A673 (cell line): ENCODE measurements at regions of chr3 and their contacts with region 1.

Region 1: GRCh38 chr3:81302045-81302444 is 459.4 kb downstream of the GBE1 start:
- DNase-seq: peak; percentile 71
- H3K4me3 ChIP-seq: no peak overlapping the region
- H3K27ac ChIP-seq: no peak overlapping the region
- H3K4me1 ChIP-seq: no peaks in the 10 kb centered on the region
- H3K27me3 ChIP-seq: no peaks in the 10 kb centered on the region
- CTCF ChIP-seq: peak; percentile 73

Region 2: GRCh38 chr3:81483046-81483445 is 181.0 kb after region 1 on chr3:
- CTCF ChIA-PET with region 1: interaction called, 10 read pairs
- POLR2A ChIA-PET with region 1: no interaction called
- intact Hi-C with region 1: no loop called
- DNase-seq: no peak
- H3K4me3 ChIP-seq: no peak overlapping the region
- H3K27ac ChIP-seq: no peak overlapping the region
- H3K4me1 ChIP-seq: no peaks in the 10 kb centered on the region
- H3K27me3 ChIP-seq: no peaks in the 10 kb centered on the region
- CTCF ChIP-seq: no peak

Region 3: DNA sequence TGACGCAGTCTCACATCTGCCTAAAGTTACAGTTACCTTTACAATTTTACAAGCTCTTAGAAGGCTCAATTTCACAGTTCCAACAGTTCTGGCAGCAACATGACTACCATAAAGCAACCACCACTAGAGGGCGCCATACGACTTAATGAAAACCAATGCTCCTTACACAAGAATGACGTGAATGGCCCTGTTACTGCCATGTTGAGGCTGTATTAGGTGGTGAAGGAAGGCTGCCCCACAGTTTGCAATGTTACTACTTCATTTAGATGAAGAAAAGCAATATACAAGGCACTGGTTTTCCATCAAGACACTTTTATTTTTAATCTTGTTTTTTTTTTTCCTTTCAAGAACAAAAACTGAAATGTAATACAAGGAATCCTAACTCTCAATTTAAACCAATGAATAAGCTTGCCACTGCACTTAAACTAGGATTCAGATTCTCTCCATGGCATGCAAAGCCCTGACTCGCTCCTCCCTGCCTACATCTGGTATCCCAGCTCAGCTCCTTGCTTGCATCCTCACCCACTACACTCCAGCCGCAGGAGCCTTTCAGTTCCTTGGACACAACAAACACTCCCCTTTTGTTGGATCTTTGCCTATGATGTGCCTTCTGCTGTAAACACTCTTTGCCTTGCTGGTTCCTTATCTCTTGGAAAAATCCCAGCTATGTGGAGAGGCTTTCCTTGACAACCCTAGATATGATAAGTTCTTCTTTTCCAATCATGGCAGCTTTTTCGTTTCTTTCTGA is 188.7 kb after region 1 on chr3:
- CTCF ChIA-PET with region 1: no interaction called
- POLR2A ChIA-PET with region 1: no interaction called
- intact Hi-C with region 1: loop called (anchors 10 kb)
- DNase-seq: peak; percentile 88
- H3K4me3 ChIP-seq: no peak overlapping the region
- H3K27ac ChIP-seq: no peak overlapping the region
- H3K4me1 ChIP-seq: no peaks in the 10 kb centered on the region
- H3K27me3 ChIP-seq: no peaks in the 10 kb centered on the region
- CTCF ChIP-seq: peak; percentile 88

Region 4: DNA sequence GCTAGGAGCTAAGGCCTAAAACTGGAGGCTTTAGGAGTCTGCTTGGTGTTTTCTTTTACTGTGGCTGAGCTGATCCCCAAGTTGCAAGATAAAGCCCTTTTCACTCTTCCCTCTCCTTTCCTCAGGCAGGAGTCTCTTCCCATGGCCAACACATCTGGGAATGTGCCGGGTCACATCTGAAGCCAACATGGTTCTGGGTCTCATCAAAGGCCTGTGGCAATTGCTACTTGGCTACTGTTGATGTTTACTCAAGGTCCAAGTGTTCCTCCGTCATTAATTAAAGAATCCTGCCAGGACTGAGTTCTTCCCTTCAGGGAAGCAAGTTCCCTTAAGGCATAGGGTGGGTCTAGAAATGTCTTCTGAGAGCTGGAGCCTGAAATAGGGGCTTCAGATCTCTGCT is 229.2 kb after region 1 on chr3:
- CTCF ChIA-PET with region 1: no interaction called
- POLR2A ChIA-PET with region 1: no interaction called
- intact Hi-C with region 1: no loop called
- DNase-seq: no peak
- H3K4me3 ChIP-seq: no peak overlapping the region
- H3K27ac ChIP-seq: no peak overlapping the region
- H3K4me1 ChIP-seq: no peaks in the 10 kb centered on the region
- H3K27me3 ChIP-seq: no peaks in the 10 kb centered on the region
- CTCF ChIP-seq: no peak

Region 5: GRCh38 chr3:81666493-81667121 is 364.6 kb after region 1 on chr3:
- CTCF ChIA-PET with region 1: no interaction called
- POLR2A ChIA-PET with region 1: no interaction called
- intact Hi-C with region 1: no loop called
- DNase-seq: peak; percentile 15
- H3K4me3 ChIP-seq: no peak overlapping the region
- H3K27ac ChIP-seq: no peak overlapping the region
- H3K4me1 ChIP-seq: no peaks in the 10 kb centered on the region
- H3K27me3 ChIP-seq: no peaks in the 10 kb centered on the region
- CTCF ChIP-seq: peak; percentile 76